GM12878 (cell line): ENCODE measurements at regions of chr2 and their contacts with region 1.

Region 1: GRCh38 chr2:12293874-12294273 is 422.9 kb upstream of the TRIB2 start:
- DNase-seq: peak; percentile 84
- ATAC-seq: peak; percentile 99
- H3K4me3 ChIP-seq: no peak overlapping the region
- H3K27ac ChIP-seq: peak overlapping the region; percentile 58
- H3K4me1 ChIP-seq: peaks cover 13% of the 10 kb centered on the region
- H3K27me3 ChIP-seq: no peaks in the 10 kb centered on the region
- CTCF ChIP-seq: no peak
- EP300 ChIP-seq: peak; percentile 42 to 96; a peak in 3 of 4 replicates
- POLR2A ChIP-seq: no peak
- RAD21 ChIP-seq: no peak

Region 2: GRCh38 chr2:10424051-10424450 is 1869.8 kb before region 1 on chr2:
- CTCF ChIA-PET with region 1: no interaction called
- POLR2A ChIA-PET with region 1: no interaction called
- RAD21 ChIA-PET with region 1: no interaction called
- SMC1A ChIA-PET with region 1: no interaction called
- in situ Hi-C with region 1: no loop called
- intact Hi-C with region 1: no loop called
- DNase-seq: no peak
- ATAC-seq: no peak
- H3K4me3 ChIP-seq: no peak overlapping the region
- H3K27ac ChIP-seq: no peak overlapping the region
- H3K4me1 ChIP-seq: no peaks in the 10 kb centered on the region
- H3K27me3 ChIP-seq: no peaks in the 10 kb centered on the region
- CTCF ChIP-seq: no peak
- EP300 ChIP-seq: no peak
- POLR2A ChIP-seq: no peak
- RAD21 ChIP-seq: no peak

Region 3: DNA sequence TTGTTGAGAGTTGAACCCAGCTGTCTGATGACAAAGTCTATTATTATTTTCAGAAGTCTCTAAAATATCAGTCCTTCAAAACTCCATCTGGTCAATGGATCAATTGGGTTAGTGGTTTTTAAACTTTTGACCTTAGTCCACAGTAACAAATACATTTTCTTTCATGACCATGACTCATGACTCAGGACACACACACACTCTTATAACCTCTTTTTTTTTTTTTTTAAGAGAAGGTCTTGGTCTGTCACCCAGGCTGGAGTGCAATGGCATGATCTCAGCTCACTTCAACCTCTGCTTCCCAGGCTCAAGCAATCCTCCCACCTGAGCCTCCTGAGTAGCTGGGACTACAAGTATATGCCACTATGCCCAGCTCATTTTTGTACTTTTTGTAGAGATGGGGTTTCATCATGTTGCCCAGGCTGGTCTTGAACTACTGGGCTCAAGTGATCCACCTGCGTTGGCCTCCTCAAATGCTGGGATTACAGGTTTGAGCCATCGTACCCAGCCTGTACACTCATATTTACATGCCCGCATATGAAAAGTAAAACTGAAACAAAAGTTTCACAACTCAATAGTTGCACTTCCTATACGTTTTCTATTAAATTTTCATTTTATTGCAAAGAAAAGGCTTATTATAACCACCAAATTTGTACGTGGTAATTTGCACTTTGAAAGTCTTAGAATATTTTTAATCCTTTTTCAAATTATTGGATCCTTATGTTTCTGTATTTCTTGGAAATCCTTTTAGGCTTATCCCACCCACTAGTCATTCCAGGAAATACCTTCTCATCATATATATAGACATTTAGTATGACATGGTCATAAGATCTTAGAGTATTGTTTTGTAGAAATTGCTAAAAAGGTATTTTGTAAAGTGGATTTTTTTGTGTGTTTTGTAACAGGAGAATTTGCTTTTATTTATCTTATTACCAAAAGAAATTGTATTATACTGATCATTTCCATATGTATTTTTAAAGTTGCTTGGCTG is 348.4 kb before region 1 on chr2:
- CTCF ChIA-PET with region 1: no interaction called
- POLR2A ChIA-PET with region 1: no interaction called
- RAD21 ChIA-PET with region 1: no interaction called
- SMC1A ChIA-PET with region 1: no interaction called
- in situ Hi-C with region 1: no loop called
- intact Hi-C with region 1: loop called (anchors 10 kb)
- DNase-seq: peak; percentile 50
- ATAC-seq: peak; percentile 90
- H3K4me3 ChIP-seq: no peak overlapping the region
- H3K27ac ChIP-seq: peak overlapping the region; percentile 48; the same call in 1 of the 2 replicates
- H3K4me1 ChIP-seq: peaks cover 13% of the 10 kb centered on the region
- H3K27me3 ChIP-seq: no peaks in the 10 kb centered on the region
- CTCF ChIP-seq: no peak
- EP300 ChIP-seq: no peak
- POLR2A ChIP-seq: no peak
- RAD21 ChIP-seq: no peak

Region 4: GRCh38 chr2:12176623-12177454 is 117.0 kb before region 1 on chr2:
- CTCF ChIA-PET with region 1: no interaction called
- POLR2A ChIA-PET with region 1: no interaction called
- RAD21 ChIA-PET with region 1: interaction called, 3 read pairs
- SMC1A ChIA-PET with region 1: interaction called, 8 read pairs
- in situ Hi-C with region 1: no loop called
- intact Hi-C with region 1: loop called (anchors 5 kb)
- DNase-seq: peak; percentile 45
- ATAC-seq: peak; percentile 97
- H3K4me3 ChIP-seq: no peak overlapping the region
- H3K27ac ChIP-seq: no peak overlapping the region
- H3K4me1 ChIP-seq: peaks cover 10% of the 10 kb centered on the region
- H3K27me3 ChIP-seq: no peaks in the 10 kb centered on the region
- CTCF ChIP-seq: no peak
- EP300 ChIP-seq: no peak
- POLR2A ChIP-seq: no peak
- RAD21 ChIP-seq: no peak

Region 5: DNA sequence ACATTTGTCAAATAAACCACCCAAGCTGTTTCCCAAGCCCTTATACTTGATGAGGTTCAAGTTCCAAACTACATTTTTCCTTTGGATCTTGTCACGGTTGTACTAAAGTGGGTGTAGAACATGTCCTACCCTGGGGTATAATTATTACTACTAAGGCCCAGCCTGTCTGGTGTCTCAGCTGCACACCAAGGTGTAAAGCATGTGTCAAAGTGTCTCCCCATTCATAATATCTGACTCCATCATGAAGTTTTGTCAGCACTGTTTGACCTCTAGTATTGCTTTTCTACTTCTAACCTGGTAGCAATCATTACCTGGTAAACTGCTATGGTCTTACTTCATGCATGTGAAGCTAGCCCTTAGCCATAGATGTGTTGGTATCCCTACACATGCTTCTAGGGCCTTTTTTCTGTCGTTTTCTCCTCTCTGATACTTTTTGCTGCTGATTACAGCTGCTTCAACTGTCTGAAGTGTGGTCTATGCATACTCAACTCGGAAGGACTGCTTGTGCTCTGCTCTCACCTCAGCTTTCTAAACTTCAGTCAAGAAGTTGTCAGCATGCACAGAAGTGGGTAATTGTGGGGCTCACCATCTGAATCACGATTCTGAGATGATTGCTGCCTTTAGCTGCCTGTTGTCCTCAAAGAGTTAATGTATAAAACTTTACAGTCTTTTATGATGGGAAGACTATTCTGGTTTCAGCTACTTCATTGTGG is 22.8 kb before region 1 on chr2:
- CTCF ChIA-PET with region 1: interaction called, 4 read pairs
- POLR2A ChIA-PET with region 1: no interaction called
- RAD21 ChIA-PET with region 1: interaction called, 4 read pairs
- SMC1A ChIA-PET with region 1: interaction called, 35 read pairs
- in situ Hi-C with region 1: no loop called
- intact Hi-C with region 1: no loop called
- DNase-seq: no peak
- ATAC-seq: peak; percentile 90
- H3K4me3 ChIP-seq: no peak overlapping the region
- H3K27ac ChIP-seq: no peak overlapping the region
- H3K4me1 ChIP-seq: peaks cover 9% of the 10 kb centered on the region
- H3K27me3 ChIP-seq: no peaks in the 10 kb centered on the region
- CTCF ChIP-seq: no peak
- EP300 ChIP-seq: no peak; a peak in 1 of 4 replicates
- POLR2A ChIP-seq: no peak
- RAD21 ChIP-seq: no peak

Region 6: GRCh38 chr2:12282780-12283695 is 10.8 kb before region 1 on chr2:
- CTCF ChIA-PET with region 1: no interaction called
- POLR2A ChIA-PET with region 1: no interaction called
- RAD21 ChIA-PET with region 1: interaction called, 3 read pairs
- SMC1A ChIA-PET with region 1: interaction called, 11 read pairs
- in situ Hi-C with region 1: no loop called
- intact Hi-C with region 1: no loop called
- DNase-seq: no peak
- ATAC-seq: peak; percentile 95
- H3K4me3 ChIP-seq: 0 out of 2 replicates have a peak overlapping the region, but pooled peaks have one; percentile 22
- H3K27ac ChIP-seq: no peak overlapping the region; the same call in 1 of the 2 replicates
- H3K4me1 ChIP-seq: peaks cover 16% of the 10 kb centered on the region
- H3K27me3 ChIP-seq: no peaks in the 10 kb centered on the region
- CTCF ChIP-seq: no peak
- EP300 ChIP-seq: peak in 1 of 2 experiments; percentile 46; a peak in 1 of 4 replicates
- POLR2A ChIP-seq: no peak
- RAD21 ChIP-seq: no peak

Region 7: GRCh38 chr2:12430407-12431133 is 136.7 kb after region 1 on chr2:
- CTCF ChIA-PET with region 1: no interaction called
- POLR2A ChIA-PET with region 1: no interaction called
- RAD21 ChIA-PET with region 1: no interaction called
- SMC1A ChIA-PET with region 1: interaction called, 7 read pairs
- in situ Hi-C with region 1: no loop called
- intact Hi-C with region 1: loop called (anchors 5 kb)
- DNase-seq: peak; percentile 91
- ATAC-seq: peak; percentile 99
- H3K4me3 ChIP-seq: no peak overlapping the region
- H3K27ac ChIP-seq: no peak overlapping the region; the same call in 1 of the 2 replicates
- H3K4me1 ChIP-seq: no peaks in the 10 kb centered on the region
- H3K27me3 ChIP-seq: no peaks in the 10 kb centered on the region
- CTCF ChIP-seq: peak in 1 of 3 experiments; percentile 12; a peak in 1 of 6 replicates
- EP300 ChIP-seq: no peak
- POLR2A ChIP-seq: no peak
- RAD21 ChIP-seq: peak; percentile 15; the same call in 1 of the 2 replicates